ENCODE measurements at regions of chr1 and their contacts with region 1.

Region 1: GRCh38 chr1:210584439-210585113 is 255.9 kb downstream of the HHAT start:
- DNase-seq: peak; percentile 74
- ATAC-seq: peak; percentile 100
- H3K4me3 ChIP-seq: no peak overlapping the region
- H3K27ac ChIP-seq: no peak overlapping the region
- H3K4me1 ChIP-seq: no peaks in the 10 kb centered on the region
- H3K27me3 ChIP-seq: no peaks in the 10 kb centered on the region
- CTCF ChIP-seq: peak; percentile 92
- EP300 ChIP-seq: no peak
- POLR2A ChIP-seq: no peak
- RAD21 ChIP-seq: peak; percentile 83

Region 2: DNA sequence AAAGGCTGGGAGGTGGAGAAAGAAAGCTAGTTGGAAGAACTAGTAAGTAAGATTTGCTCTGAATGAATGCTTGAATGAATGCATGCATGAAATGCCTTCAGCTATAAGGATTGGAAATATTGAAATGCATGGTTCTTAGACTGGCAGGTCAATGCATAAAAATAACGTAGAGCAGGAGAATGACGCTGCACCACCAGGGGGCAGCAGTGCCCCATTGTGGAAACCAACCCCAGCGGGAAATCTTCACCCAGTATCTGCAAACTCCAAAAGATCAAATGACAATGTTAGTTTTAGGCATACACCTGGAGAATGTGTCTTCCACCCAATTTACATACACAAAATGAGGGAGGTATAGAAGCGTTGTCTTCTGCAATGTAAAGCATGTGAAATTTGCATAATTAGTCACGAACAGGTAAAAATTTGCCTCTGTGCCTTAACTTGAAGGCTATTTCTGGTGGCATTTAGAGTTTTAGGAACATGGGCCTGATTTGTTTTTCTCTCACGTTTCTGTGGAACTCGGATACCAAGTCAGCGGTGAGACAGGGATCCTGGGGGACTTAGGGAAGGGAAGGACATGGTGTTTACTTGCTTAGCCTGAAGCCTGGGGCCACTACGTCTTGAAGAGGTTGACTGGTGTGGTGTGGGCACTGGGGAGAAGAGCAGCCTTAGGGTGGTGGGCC is 177.2 kb before region 1 on chr1:
- CTCF ChIA-PET with region 1: no interaction called
- POLR2A ChIA-PET with region 1: no interaction called
- in situ Hi-C with region 1: no loop called
- intact Hi-C with region 1: loop called (anchors 5 kb)
- DNase-seq: peak; percentile 15
- ATAC-seq: peak; percentile 89
- H3K4me3 ChIP-seq: no peak overlapping the region
- H3K27ac ChIP-seq: no peak overlapping the region
- H3K4me1 ChIP-seq: no peaks in the 10 kb centered on the region; the same call in 1 of the 2 replicates
- H3K27me3 ChIP-seq: no peaks in the 10 kb centered on the region
- CTCF ChIP-seq: peak; percentile 88
- EP300 ChIP-seq: no peak
- POLR2A ChIP-seq: no peak
- RAD21 ChIP-seq: peak; percentile 35; the same call in 1 of the 2 replicates

Region 3: GRCh38 chr1:210448297-210448892 is 136.2 kb before region 1 on chr1:
- CTCF ChIA-PET with region 1: no interaction called
- POLR2A ChIA-PET with region 1: no interaction called
- in situ Hi-C with region 1: no loop called
- intact Hi-C with region 1: loop called (anchors 1 kb)
- DNase-seq: peak; percentile 14
- ATAC-seq: peak; percentile 70
- H3K4me3 ChIP-seq: no peak overlapping the region
- H3K27ac ChIP-seq: no peak overlapping the region
- H3K4me1 ChIP-seq: no peaks in the 10 kb centered on the region
- H3K27me3 ChIP-seq: no peaks in the 10 kb centered on the region
- CTCF ChIP-seq: peak; percentile 52
- EP300 ChIP-seq: no peak
- POLR2A ChIP-seq: no peak
- RAD21 ChIP-seq: no peak

Region 4: DNA sequence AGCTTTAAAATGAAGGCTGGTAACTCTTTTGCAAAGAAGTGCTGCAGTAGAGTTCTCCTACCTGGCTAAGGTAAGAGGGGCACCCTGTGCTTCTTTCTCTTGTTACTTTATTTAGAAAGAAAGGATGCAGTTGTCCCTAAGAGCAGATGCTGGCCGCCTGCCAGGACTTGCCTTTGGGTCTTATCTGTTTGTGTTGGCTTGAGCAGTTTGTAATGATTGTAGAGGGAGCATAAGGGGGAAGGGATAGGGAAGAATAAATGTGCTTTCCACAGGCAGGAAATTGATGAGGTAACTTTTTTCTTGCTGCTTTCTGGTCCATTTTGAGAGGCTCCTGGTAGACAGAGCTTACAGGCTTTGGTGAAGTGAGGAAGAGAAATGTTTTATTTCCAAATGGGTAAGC is 26.3 kb before region 1 on chr1:
- CTCF ChIA-PET with region 1: no interaction called
- POLR2A ChIA-PET with region 1: no interaction called
- in situ Hi-C with region 1: no loop called
- intact Hi-C with region 1: no loop called
- DNase-seq: no peak
- ATAC-seq: no peak
- H3K4me3 ChIP-seq: no peak overlapping the region
- H3K27ac ChIP-seq: no peak overlapping the region
- H3K4me1 ChIP-seq: no peaks in the 10 kb centered on the region
- H3K27me3 ChIP-seq: no peaks in the 10 kb centered on the region
- CTCF ChIP-seq: no peak
- EP300 ChIP-seq: no peak
- POLR2A ChIP-seq: no peak
- RAD21 ChIP-seq: no peak

Region 5: DNA sequence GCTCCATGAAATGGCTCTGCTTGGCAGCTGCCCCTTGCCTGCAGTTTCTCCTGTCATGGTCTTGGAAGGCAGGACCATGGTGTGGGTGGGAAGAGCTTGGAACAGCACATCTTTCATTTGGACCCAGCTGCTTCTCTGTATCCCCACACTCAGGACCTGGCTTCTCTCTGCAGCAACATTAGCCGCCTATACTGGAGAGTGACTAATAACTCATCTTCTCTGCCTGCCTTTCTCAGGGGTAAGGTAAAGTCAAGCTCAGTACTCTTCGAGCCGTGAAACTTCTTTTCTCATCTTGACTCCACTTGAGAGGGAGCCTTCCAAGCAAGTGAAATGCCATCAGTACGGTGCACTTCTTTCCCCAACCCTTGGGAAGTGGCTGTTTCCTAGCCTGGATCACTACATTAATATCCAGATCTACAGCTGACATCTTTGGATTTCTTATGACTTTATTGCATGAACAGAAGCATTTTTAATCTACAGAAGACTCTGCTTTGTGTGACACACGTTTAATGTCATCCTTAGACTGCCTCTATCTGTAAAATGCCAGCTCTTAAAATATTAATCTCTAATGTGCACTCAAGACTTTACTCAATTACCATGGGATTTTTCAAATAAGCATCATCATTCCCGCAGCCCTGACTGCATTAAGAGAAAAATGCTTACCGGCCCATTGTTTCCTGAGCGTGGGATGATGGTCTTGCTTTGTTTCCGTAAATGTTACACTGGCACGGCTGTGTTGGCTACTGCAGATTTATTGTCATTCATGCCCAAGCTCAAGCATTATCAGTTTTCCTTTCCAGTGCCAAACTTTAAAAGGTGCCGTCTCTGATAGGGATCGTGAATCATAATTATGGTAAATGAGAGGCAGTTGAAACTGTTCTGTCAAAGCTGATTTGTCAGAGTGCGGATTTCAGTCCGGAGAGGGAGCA is 13.0 kb before region 1 on chr1:
- CTCF ChIA-PET with region 1: no interaction called
- POLR2A ChIA-PET with region 1: no interaction called
- in situ Hi-C with region 1: no loop called
- intact Hi-C with region 1: no loop called
- DNase-seq: no peak
- ATAC-seq: no peak
- H3K4me3 ChIP-seq: no peak overlapping the region
- H3K27ac ChIP-seq: no peak overlapping the region
- H3K4me1 ChIP-seq: no peaks in the 10 kb centered on the region
- H3K27me3 ChIP-seq: no peaks in the 10 kb centered on the region
- CTCF ChIP-seq: no peak
- EP300 ChIP-seq: no peak
- POLR2A ChIP-seq: no peak
- RAD21 ChIP-seq: no peak

Region 6: GRCh38 chr1:210951279-210951678 is 366.7 kb after region 1 on chr1:
- CTCF ChIA-PET with region 1: interaction called, 15 read pairs
- POLR2A ChIA-PET with region 1: no interaction called
- in situ Hi-C with region 1: no loop called
- intact Hi-C with region 1: loop called (anchors 1 kb)
- DNase-seq: no peak
- ATAC-seq: no peak
- H3K4me3 ChIP-seq: no peak overlapping the region
- H3K27ac ChIP-seq: no peak overlapping the region
- H3K4me1 ChIP-seq: no peaks in the 10 kb centered on the region
- H3K27me3 ChIP-seq: no peaks in the 10 kb centered on the region
- CTCF ChIP-seq: no peak
- EP300 ChIP-seq: no peak
- POLR2A ChIP-seq: no peak
- RAD21 ChIP-seq: no peak

Region 7: GRCh38 chr1:210978316-210978993 is 393.9 kb after region 1 on chr1:
- CTCF ChIA-PET with region 1: no interaction called
- POLR2A ChIA-PET with region 1: no interaction called
- in situ Hi-C with region 1: no loop called
- intact Hi-C with region 1: no loop called
- DNase-seq: no peak
- ATAC-seq: peak; percentile 81
- H3K4me3 ChIP-seq: no peak overlapping the region
- H3K27ac ChIP-seq: no peak overlapping the region
- H3K4me1 ChIP-seq: peaks cover 9% of the 10 kb centered on the region; the same call in 1 of the 2 replicates
- H3K27me3 ChIP-seq: no peaks in the 10 kb centered on the region
- CTCF ChIP-seq: no peak
- EP300 ChIP-seq: no peak
- POLR2A ChIP-seq: no peak
- RAD21 ChIP-seq: no peak

Measured in HepG2 (cell line).